B cell (primary cell): ENCODE measurements at regions of chr1 and their contacts with region 1.

Region 1: GRCh38 chr1:227787513-227788270 is 27.8 kb upstream of the PRSS38 start:
- DNase-seq: peak; percentile 97
- ATAC-seq: peak; percentile 92
- H3K4me3 ChIP-seq: peak overlapping the region; percentile 39 to 79 (median 76)
- H3K4me3 Mint-ChIP-seq: peak overlapping the region; percentile 91
- H3K27ac ChIP-seq: peak overlapping the region; percentile 27 to 57
- H3K27ac Mint-ChIP-seq: peak overlapping the region; percentile 68
- H3K4me1 ChIP-seq: peaks cover 26 to 35% of the 10 kb centered on the region in 2 donors
- H3K4me1 Mint-ChIP-seq: peaks cover 19% of the 10 kb centered on the region
- H3K27me3 ChIP-seq: no peaks in the 10 kb centered on the region
- H3K27me3 Mint-ChIP-seq: no peaks in the 10 kb centered on the region
- CTCF ChIP-seq: no peak

Region 2: GRCh38 chr1:227563324-227564201 is 224.1 kb before region 1 on chr1 and contains the start of gene ZNF678:
- CTCF ChIA-PET with region 1: no interaction called
- POLR2A ChIA-PET with region 1: no interaction called
- intact Hi-C with region 1: loop called (anchors 2 kb)
- DNase-seq: peak; percentile 94
- ATAC-seq: peak; percentile 88
- H3K4me3 ChIP-seq: peak within 1 kb of the TSS; percentile 74 to 87 (median 84)
- H3K4me3 Mint-ChIP-seq: peak within 1 kb of the TSS; percentile 98
- H3K27ac ChIP-seq: peak within 1 kb of the TSS; percentile 86 to 96
- H3K27ac Mint-ChIP-seq: peak within 1 kb of the TSS; percentile 93
- H3K4me1 ChIP-seq: peaks cover 22 to 31% of the 10 kb centered on the region in 2 donors
- H3K4me1 Mint-ChIP-seq: peaks cover 52% of the 10 kb centered on the region
- H3K27me3 ChIP-seq: peaks cover 0 to 30% (median 9%) of the 10 kb centered on the region in 4 experiments
- H3K27me3 Mint-ChIP-seq: peaks cover 16% of the 10 kb centered on the region
- CTCF ChIP-seq: no peak
- total RNA-seq, gene ZNF678: 16.0 and 20.3 TPM in 2 replicates

Region 3: DNA sequence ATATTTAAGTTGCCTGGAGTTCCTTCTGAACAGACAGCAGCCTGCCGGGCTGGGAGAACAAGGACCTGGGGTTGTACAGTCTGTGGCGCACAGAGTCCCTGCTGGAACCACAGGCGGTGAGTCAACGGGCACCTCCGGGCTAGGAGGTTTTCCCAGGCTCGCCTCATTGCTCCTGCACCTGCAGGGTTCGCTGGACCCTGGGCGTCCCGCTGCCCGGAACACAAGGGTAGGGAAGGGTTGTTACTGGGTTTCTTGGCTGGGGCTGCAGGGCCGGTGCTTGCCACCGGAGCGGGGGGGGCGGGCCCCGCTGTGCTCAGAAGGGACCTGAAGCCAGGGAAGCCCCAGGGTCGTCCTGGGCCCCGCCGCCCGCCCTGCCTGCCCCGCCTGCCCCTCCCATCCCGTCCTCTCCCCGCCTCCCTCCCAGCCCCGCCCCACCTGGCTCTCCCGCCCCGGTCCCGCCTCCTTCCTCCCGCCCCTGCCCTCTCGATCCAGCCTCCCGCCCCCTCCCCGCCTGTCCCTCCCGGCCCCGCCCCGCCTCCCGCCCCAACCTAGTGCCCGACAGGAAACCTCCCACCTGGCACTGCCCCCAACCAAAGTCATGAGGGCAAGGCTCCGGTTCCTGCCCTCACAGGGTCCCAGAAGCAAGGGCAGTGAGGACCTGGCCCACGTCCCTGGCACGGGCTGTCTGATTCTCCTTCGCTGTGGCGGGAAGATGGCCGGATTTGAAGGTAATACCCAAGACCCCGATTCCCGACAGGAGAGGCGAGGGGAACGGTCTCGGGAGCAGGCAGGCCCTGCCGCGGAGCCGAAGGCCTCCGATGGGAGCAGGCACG is 59.4 kb before region 1 on chr1:
- CTCF ChIA-PET with region 1: no interaction called
- POLR2A ChIA-PET with region 1: interaction called, 7 read pairs
- intact Hi-C with region 1: loop called (anchors 1 kb)
- DNase-seq: peak; percentile 70
- ATAC-seq: peak; percentile 75
- H3K4me3 ChIP-seq: peak overlapping the region in 4 of 5 experiments; percentile 53 to 78 (median 64)
- H3K4me3 Mint-ChIP-seq: peak overlapping the region; percentile 87
- H3K27ac ChIP-seq: peak overlapping the region; percentile 24 to 57
- H3K27ac Mint-ChIP-seq: peak overlapping the region; percentile 63
- H3K4me1 ChIP-seq: peaks cover 11 to 20% of the 10 kb centered on the region in 2 donors
- H3K4me1 Mint-ChIP-seq: peaks cover 30% of the 10 kb centered on the region
- H3K27me3 ChIP-seq: peaks cover 0 to 4% (median 0%) of the 10 kb centered on the region in 4 experiments
- H3K27me3 Mint-ChIP-seq: no peaks in the 10 kb centered on the region
- CTCF ChIP-seq: no peak

Region 4: GRCh38 chr1:227734856-227735538 is 52.7 kb before region 1 on chr1 and contains the starts of genes JMJD4 and SNAP47:
- CTCF ChIA-PET with region 1: no interaction called
- POLR2A ChIA-PET with region 1: interaction called, 6 read pairs
- intact Hi-C with region 1: loop called (anchors 1 kb)
- DNase-seq: peak; percentile 95
- ATAC-seq: peak; percentile 91
- H3K4me3 ChIP-seq: peak within 1 kb of the TSS; percentile 58 to 96 (median 83)
- H3K4me3 Mint-ChIP-seq: peak within 1 kb of the TSS; percentile 91
- H3K27ac ChIP-seq: peak within 1 kb of the TSS; percentile 55 to 90
- H3K27ac Mint-ChIP-seq: peak within 1 kb of the TSS; percentile 87
- H3K4me1 ChIP-seq: peaks cover 12 to 23% of the 10 kb centered on the region in 2 donors
- H3K4me1 Mint-ChIP-seq: peaks cover 36% of the 10 kb centered on the region
- H3K27me3 ChIP-seq: no peaks in the 10 kb centered on the region
- H3K27me3 Mint-ChIP-seq: no peaks in the 10 kb centered on the region
- CTCF ChIP-seq: no peak
- total RNA-seq, gene JMJD4: 30.6 and 30.7 TPM in 2 replicates
- total RNA-seq, gene SNAP47: 34.3 and 34.9 TPM in 2 replicates

Region 5: GRCh38 chr1:227762233-227762911 is 25.3 kb before region 1 on chr1:
- CTCF ChIA-PET with region 1: interaction called, 3 read pairs
- POLR2A ChIA-PET with region 1: no interaction called
- intact Hi-C with region 1: loop called (anchors 1 kb)
- DNase-seq: peak; percentile 79
- ATAC-seq: peak; percentile 94
- H3K4me3 ChIP-seq: no peak overlapping the region
- H3K4me3 Mint-ChIP-seq: no peak overlapping the region
- H3K27ac ChIP-seq: no peak overlapping the region
- H3K27ac Mint-ChIP-seq: no peak overlapping the region
- H3K4me1 ChIP-seq: peaks cover 3 to 23% of the 10 kb centered on the region in 2 donors
- H3K4me1 Mint-ChIP-seq: peaks cover 19% of the 10 kb centered on the region
- H3K27me3 ChIP-seq: no peaks in the 10 kb centered on the region
- H3K27me3 Mint-ChIP-seq: no peaks in the 10 kb centered on the region
- CTCF ChIP-seq: peak; percentile 89